ENCODE measurements at regions of chr17 and their contacts with region 1.

Region 1: DNA sequence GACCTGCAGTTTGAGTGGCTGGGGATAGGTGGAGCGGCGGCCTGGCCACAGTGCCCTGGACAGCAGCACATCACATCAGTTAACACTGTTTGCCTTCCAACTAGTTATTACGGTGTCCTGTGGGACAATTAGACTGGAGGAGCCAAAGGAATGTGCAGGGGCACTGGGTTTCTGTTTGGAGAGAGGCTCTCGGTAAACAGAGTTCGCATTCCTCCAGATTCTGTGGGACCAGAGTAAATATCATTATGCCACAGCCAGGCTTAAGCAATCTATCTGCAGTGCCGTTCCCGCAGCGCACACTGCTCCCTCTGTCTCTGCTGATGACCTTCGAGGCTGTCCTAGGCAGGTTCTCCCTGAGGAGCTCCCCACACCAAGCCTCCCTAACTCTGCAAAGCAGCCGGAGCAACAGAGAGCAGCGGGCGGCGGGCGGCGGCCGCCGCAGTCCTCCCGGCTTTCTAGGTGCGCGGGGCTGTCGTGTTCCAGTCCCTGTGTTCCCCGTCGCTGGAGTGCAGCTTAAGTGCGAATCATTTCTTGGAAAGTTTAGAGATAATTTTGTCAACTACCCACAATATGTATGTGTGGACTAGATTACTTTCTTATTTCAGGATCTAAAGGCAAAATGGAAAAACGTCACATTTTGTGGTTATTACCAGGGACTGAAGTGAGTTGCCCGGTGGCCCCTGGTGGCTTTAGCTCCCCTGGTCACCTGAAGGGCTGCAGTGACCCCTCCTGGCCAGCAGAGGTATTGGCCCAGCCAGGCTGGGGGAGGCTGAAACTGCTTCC is 43.2 kb downstream of the PGS1 start:
- DNase-seq: peak; percentile 80 to 89
- H3K4me3 ChIP-seq: no peak overlapping the region
- H3K27ac ChIP-seq: peak overlapping the region in 2 of 5 donors; percentile 32 to 57
- H3K4me1 ChIP-seq: peaks cover 6 to 46% (median 10%) of the 10 kb centered on the region in 4 donors
- H3K27me3 ChIP-seq: no peaks in the 10 kb centered on the region
- CTCF ChIP-seq: peak in 6 of 7 experiments; percentile 63 to 99 (median 97)
- EP300 ChIP-seq: no peak
- POLR2A ChIP-seq: no peak

Region 2: GRCh38 chr17:78272181-78272913 is 149.3 kb before region 1 on chr17:
- intact Hi-C with region 1: no loop called
- DNase-seq: peak; percentile 79 to 94
- H3K4me3 ChIP-seq: peak overlapping the region in 1 of 4 donors; percentile 24
- H3K27ac ChIP-seq: peak overlapping the region in 2 of 5 donors; percentile 46 to 59
- H3K4me1 ChIP-seq: peaks cover 0 to 36% (median 17%) of the 10 kb centered on the region in 4 donors
- H3K27me3 ChIP-seq: peaks cover 0 to 55% (median 0%) of the 10 kb centered on the region in 3 donors
- CTCF ChIP-seq: no peak
- EP300 ChIP-seq: no peak
- POLR2A ChIP-seq: no peak

Region 3: DNA sequence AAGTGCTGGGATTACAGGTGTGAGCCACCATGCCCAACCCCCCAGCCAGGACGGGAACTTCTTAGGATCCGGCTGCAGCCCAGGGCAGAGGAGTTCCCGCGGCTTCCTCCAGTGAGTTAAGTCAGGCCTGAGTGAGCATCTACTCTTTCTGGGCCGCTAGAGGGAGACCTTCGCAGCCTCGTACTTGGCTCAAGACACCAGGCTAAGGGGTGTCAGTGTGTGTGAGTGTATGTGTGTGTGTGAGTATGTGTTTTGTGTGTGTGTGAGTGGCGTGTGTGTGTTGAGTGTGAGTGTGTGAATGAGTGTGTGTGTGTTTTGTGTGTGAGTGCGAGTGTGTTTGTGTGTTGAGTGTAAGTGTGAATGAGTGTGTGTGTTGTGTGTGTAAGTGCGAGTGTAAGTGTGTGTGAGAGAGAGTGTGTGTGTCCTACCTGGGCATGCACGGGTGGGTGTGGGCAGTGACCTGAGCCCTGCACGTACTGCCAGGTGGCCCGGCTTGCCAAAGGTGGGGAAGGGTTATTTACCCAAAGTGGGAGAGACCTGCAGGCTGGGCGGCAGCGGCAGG is 131.8 kb before region 1 on chr17:
- intact Hi-C with region 1: loop called (anchors 5 kb)
- DNase-seq: peak; percentile 82 to 96
- H3K4me3 ChIP-seq: no peak overlapping the region
- H3K27ac ChIP-seq: no peak overlapping the region
- H3K4me1 ChIP-seq: peaks cover 4 to 15% (median 9%) of the 10 kb centered on the region in 4 donors
- H3K27me3 ChIP-seq: no peaks in the 10 kb centered on the region
- CTCF ChIP-seq: peak in 5 of 7 experiments; percentile 59 to 94 (median 77)
- EP300 ChIP-seq: no peak
- POLR2A ChIP-seq: no peak

Region 4: GRCh38 chr17:78378225-78379130 is 43.2 kb before region 1 on chr17 and contains the start of gene PGS1:
- intact Hi-C with region 1: loop called (anchors 10 kb)
- DNase-seq: peak; percentile 83 to 93
- H3K4me3 ChIP-seq: peak within 1 kb of the TSS; percentile 84 to 98 (median 93)
- H3K27ac ChIP-seq: peak within 1 kb of the TSS; percentile 90 to 95 (median 93)
- H3K4me1 ChIP-seq: peaks cover 31 to 68% (median 51%) of the 10 kb centered on the region in 4 donors
- H3K27me3 ChIP-seq: no peaks in the 10 kb centered on the region
- CTCF ChIP-seq: no peak
- EP300 ChIP-seq: peak; percentile 13
- POLR2A ChIP-seq: peak in 1 of 4 donors; percentile 33
- total RNA-seq, gene PGS1: 27.8 to 209 (median 41.7) TPM